Activated CD4-positive, alpha-beta T cell treated with anti-CD3 and anti-CD28 coated beads, Interleukin-2, amount 10 ng/mL, durations not matched to agents 24 days and 14 days (primary cell): ENCODE measurements at regions of chr2 and their contacts with region 1.

Region 1: DNA sequence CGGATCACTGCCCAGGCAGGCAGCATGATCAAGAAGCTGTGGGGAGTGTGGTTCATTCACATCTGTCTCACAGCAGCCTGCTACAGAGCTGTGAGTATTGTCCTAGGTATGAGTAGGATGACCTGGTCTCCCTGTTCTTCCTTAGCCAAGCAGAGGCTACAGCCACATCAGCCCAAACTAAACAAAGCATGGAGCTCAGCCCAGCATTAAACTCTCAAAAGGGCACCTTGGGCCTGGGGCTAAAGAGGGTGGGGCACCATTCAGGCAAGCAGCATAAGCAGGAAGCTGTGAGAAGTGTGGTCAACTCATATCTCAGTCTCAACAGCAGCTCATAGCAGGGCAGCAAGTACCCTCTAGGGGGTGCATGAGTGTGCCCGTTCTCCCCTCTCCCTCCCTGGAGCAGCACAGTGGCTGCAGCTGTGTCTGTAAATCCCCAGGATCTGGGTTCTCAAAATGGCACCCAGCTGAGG is 139.6 kb downstream of the TRABD2A start:
- DNase-seq: peak; percentile 80
- H3K4me3 Mint-ChIP-seq: no peak overlapping the region
- H3K27ac Mint-ChIP-seq: no peak overlapping the region
- H3K4me1 Mint-ChIP-seq: peaks cover 7% of the 10 kb centered on the region
- H3K27me3 Mint-ChIP-seq: peaks cover 14% of the 10 kb centered on the region

Region 2: GRCh38 chr2:84817239-84817655 is 75.9 kb after region 1 on chr2:
- intact Hi-C with region 1: no loop called
- DNase-seq: no peak
- H3K4me3 Mint-ChIP-seq: peak overlapping the region; percentile 9
- H3K27ac Mint-ChIP-seq: peak overlapping the region; percentile 56
- H3K4me1 Mint-ChIP-seq: peaks cover 32% of the 10 kb centered on the region
- H3K27me3 Mint-ChIP-seq: no peaks in the 10 kb centered on the region

Region 3: DNA sequence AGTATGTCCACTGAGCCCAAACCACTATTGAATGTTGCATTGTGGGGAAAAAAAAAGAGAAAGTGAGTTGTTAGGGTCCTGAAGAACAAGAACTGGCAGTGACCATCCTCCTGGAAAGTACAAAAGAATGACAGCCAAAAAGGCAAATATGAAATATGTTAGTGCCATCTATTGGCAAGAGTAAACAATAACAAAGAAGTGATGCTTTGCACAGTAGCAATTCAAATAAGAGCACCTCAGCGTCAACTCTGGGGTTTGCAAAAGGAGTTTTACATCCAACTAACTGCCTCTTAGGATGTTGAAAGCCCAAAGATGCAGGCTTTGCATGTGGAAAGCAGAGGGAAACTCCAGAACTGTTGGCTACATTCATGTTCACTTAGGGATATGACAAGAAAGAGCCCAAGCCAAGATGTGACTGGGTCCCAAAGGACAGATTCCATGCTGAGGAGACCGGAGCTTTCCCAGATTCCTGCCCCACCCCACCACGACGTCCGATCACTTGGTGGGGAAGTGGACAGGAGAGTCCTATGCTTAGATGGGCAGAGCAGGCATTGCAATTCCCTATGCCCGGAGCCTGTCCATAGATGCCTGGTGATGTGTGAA is 124.0 kb after region 1 on chr2:
- intact Hi-C with region 1: loop called (anchors 2 kb)
- DNase-seq: peak; percentile 72
- H3K4me3 Mint-ChIP-seq: no peak overlapping the region
- H3K27ac Mint-ChIP-seq: peak overlapping the region; percentile 45
- H3K4me1 Mint-ChIP-seq: peaks cover 55% of the 10 kb centered on the region
- H3K27me3 Mint-ChIP-seq: no peaks in the 10 kb centered on the region